Caco-2 (cell line): ENCODE measurements at regions of chr20 and their contacts with region 1.

Region 1: DNA sequence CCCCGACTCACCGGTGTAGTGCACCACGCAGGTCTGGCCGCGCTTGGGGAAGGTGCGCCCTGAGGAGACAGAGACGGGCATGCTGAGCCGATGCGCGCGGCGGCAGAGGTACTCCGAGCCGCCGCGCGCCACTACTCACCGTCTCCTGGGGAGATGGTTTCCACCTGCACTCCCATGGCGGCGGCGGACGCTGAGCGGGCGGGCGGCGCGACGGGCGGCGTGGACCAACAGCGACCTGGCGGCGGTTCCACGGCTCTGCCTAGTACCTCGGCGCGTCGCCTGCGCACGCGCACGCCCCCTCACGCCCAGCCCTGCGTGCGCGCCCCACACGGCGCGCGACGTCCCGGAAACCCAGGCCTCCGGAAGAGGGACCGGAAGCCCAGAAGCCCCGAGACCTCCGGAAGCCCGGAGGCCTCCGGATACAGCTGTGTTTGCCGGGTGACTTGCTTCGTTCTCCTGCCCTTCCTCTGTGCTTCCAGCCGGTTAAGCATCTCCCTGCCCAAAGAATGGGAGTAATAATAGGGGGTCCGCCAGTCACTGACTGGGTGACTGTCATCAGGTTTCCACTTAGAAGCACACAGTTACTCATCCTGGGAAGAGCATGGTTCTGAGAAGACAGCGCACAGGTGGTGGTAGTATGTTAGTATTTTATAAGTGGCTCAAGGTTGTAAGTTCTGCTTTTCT is at the start of gene FKBP1A:
- DNase-seq: peak; percentile 91 to 92
- H3K4me3 ChIP-seq: peak within 1 kb of the TSS; percentile 72
- H3K4me3 Mint-ChIP-seq: peak within 1 kb of the TSS; percentile 92
- H3K27ac Mint-ChIP-seq: peak within 1 kb of the TSS; percentile 64
- H3K4me1 ChIP-seq: peaks cover 14% of the 10 kb centered on the region
- H3K4me1 Mint-ChIP-seq: peaks cover 16% of the 10 kb centered on the region
- H3K27me3 ChIP-seq: no peaks in the 10 kb centered on the region
- H3K27me3 Mint-ChIP-seq: no peaks in the 10 kb centered on the region
- CTCF ChIP-seq: no peak
- total RNA-seq, gene FKBP1A: 220 and 228 TPM in 2 replicates

Region 2: GRCh38 chr20:1254254-1254653 is 138.7 kb before region 1 on chr20:
- CTCF ChIA-PET with region 1: no interaction called
- POLR2A ChIA-PET with region 1: interaction called, 11 read pairs
- intact Hi-C with region 1: no loop called
- DNase-seq: no peak
- H3K4me3 ChIP-seq: no peak overlapping the region
- H3K4me3 Mint-ChIP-seq: no peak overlapping the region
- H3K27ac Mint-ChIP-seq: no peak overlapping the region
- H3K4me1 ChIP-seq: no peaks in the 10 kb centered on the region
- H3K4me1 Mint-ChIP-seq: no peaks in the 10 kb centered on the region
- H3K27me3 ChIP-seq: no peaks in the 10 kb centered on the region
- H3K27me3 Mint-ChIP-seq: peaks cover 10% of the 10 kb centered on the region
- CTCF ChIP-seq: no peak

Region 3: GRCh38 chr20:1325173-1326030 is 67.6 kb before region 1 on chr20:
- CTCF ChIA-PET with region 1: no interaction called
- POLR2A ChIA-PET with region 1: interaction called, 6 read pairs
- intact Hi-C with region 1: loop called (anchors 5 kb)
- DNase-seq: peak; percentile 97
- H3K4me3 ChIP-seq: peak overlapping the region; percentile 72
- H3K4me3 Mint-ChIP-seq: no peak overlapping the region
- H3K27ac Mint-ChIP-seq: no peak overlapping the region
- H3K4me1 ChIP-seq: peaks cover 31% of the 10 kb centered on the region
- H3K4me1 Mint-ChIP-seq: peaks cover 13% of the 10 kb centered on the region
- H3K27me3 ChIP-seq: no peaks in the 10 kb centered on the region
- H3K27me3 Mint-ChIP-seq: peaks cover 2% of the 10 kb centered on the region
- CTCF ChIP-seq: no peak

Region 4: GRCh38 chr20:1437235-1437904 is 44.4 kb after region 1 on chr20:
- CTCF ChIA-PET with region 1: interaction called, 4 read pairs
- POLR2A ChIA-PET with region 1: no interaction called
- intact Hi-C with region 1: loop called (anchors 1 kb)
- DNase-seq: peak; percentile 73 to 76
- H3K4me3 ChIP-seq: no peak overlapping the region
- H3K4me3 Mint-ChIP-seq: no peak overlapping the region
- H3K27ac Mint-ChIP-seq: no peak overlapping the region
- H3K4me1 ChIP-seq: no peaks in the 10 kb centered on the region
- H3K4me1 Mint-ChIP-seq: no peaks in the 10 kb centered on the region
- H3K27me3 ChIP-seq: no peaks in the 10 kb centered on the region
- H3K27me3 Mint-ChIP-seq: no peaks in the 10 kb centered on the region
- CTCF ChIP-seq: peak; percentile 83 to 94

Region 5: GRCh38 chr20:1466211-1467081 is 73.5 kb after region 1 on chr20 and contains the start of gene NSFL1C:
- CTCF ChIA-PET with region 1: interaction called, 5 read pairs
- POLR2A ChIA-PET with region 1: interaction called, 4 read pairs
- intact Hi-C with region 1: loop called (anchors 1 kb)
- DNase-seq: peak; percentile 95 to 99
- H3K4me3 ChIP-seq: peak within 1 kb of the TSS; percentile 92
- H3K4me3 Mint-ChIP-seq: peak within 1 kb of the TSS; percentile 74
- H3K27ac Mint-ChIP-seq: peak within 1 kb of the TSS; percentile 64
- H3K4me1 ChIP-seq: peaks cover 13% of the 10 kb centered on the region
- H3K4me1 Mint-ChIP-seq: peaks cover 34% of the 10 kb centered on the region
- H3K27me3 ChIP-seq: no peaks in the 10 kb centered on the region
- H3K27me3 Mint-ChIP-seq: no peaks in the 10 kb centered on the region
- CTCF ChIP-seq: peak; percentile 94 to 97
- total RNA-seq, gene NSFL1C: 104 and 119 TPM in 2 replicates

Region 6: GRCh38 chr20:1503564-1504227 is 110.7 kb after region 1 on chr20:
- CTCF ChIA-PET with region 1: interaction called, 8 read pairs
- POLR2A ChIA-PET with region 1: interaction called, 6 read pairs
- intact Hi-C with region 1: loop called (anchors 1 kb)
- DNase-seq: peak; percentile 88
- H3K4me3 ChIP-seq: no peak overlapping the region
- H3K4me3 Mint-ChIP-seq: no peak overlapping the region
- H3K27ac Mint-ChIP-seq: no peak overlapping the region
- H3K4me1 ChIP-seq: peaks cover 14% of the 10 kb centered on the region
- H3K4me1 Mint-ChIP-seq: peaks cover 18% of the 10 kb centered on the region
- H3K27me3 ChIP-seq: no peaks in the 10 kb centered on the region
- H3K27me3 Mint-ChIP-seq: peaks cover 12% of the 10 kb centered on the region
- CTCF ChIP-seq: peak; percentile 92 to 99